GM10248 (cell line): ENCODE measurements at regions of chr6 and their contacts with region 1.

Region 1: GRCh38 chr6:25263657-25264056 is 15.5 kb upstream of the CARMIL1 start:
- DNase-seq: no peak
- CTCF ChIP-seq: no peak

Region 2: DNA sequence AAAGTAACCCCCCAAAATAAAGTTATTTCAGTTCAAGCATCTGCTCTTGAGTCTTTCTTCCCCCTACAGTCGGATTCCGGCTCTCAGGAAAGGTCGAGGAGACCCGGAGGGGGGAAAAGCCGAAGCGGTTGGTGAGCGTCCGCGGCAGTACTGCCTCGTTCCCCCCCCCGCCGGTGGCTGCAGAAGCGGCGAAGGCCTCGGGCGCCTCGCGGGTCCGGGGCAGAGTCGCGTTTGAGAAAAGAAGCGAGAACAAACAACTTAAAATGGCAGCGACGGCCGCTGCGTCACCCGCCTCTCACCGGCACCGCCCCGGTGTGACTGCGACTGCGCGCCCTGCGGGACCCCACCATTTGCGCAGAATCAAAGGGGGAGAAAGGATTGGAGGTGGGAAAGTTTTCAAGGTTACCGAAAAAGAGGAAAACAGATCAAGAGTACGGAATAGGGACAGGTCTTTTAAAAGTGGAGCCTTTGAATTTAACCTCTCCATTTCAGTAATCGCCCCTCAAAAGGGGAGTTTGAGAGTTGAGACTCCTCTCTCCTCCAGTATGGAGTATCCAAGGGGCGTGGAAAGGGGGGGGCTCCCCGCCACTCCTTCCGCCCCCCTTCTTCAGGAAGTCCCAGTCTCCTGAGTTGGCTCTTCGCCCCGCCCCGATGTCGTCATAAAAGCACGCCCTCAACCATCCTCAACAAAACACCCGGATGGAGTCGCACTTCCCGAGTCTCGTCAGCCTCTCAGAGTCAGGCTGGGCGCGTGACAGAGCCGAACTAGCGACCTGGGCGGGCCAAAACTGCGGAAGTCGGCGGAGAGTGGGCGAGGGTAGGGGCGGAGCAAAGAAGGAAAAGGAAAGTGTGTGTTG is 542.8 kb before region 1 on chr6:
- CTCF ChIA-PET with region 1: no interaction called
- POLR2A ChIA-PET with region 1: no interaction called
- DNase-seq: peak; percentile 97
- CTCF ChIP-seq: no peak

Region 3: DNA sequence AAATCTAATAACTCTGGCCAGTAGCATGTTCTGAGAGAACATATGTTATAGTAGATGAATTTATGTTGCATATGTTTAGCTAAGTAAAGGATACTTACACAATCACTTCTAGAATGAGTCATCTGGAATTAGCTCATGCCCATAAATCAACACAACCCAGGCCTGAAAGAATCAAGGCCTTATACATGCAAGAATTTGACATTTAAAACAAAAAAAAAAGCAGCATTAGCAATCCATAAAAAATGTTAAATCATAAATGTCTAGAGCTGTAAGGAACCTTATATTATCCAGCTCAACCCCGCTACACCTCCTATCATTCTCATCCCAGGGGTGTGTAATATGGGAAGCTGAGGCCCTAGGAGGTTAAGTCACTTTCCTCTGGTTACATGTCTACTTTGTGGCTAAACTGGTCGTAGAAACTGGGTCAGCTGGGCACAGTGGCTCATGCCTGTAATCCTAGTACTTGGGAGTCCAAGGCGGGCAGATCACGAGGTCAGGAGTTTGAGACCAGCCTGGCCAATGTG is 89.6 kb before region 1 on chr6:
- CTCF ChIA-PET with region 1: no interaction called
- POLR2A ChIA-PET with region 1: no interaction called
- DNase-seq: no peak
- CTCF ChIP-seq: no peak

Region 4: GRCh38 chr6:25242567-25242966 is 21.1 kb before region 1 on chr6:
- CTCF ChIA-PET with region 1: interaction called, 19 read pairs
- POLR2A ChIA-PET with region 1: no interaction called
- DNase-seq: no peak
- CTCF ChIP-seq: no peak

Region 5: GRCh38 chr6:25288143-25288917 is 24.7 kb after region 1 on chr6:
- CTCF ChIA-PET with region 1: interaction called, 13 read pairs
- POLR2A ChIA-PET with region 1: no interaction called
- DNase-seq: no peak
- CTCF ChIP-seq: no peak

Region 6: GRCh38 chr6:25497383-25498040 is 233.9 kb after region 1 on chr6:
- CTCF ChIA-PET with region 1: interaction called, 97 read pairs
- POLR2A ChIA-PET with region 1: no interaction called
- DNase-seq: no peak
- CTCF ChIP-seq: no peak

Region 7: DNA sequence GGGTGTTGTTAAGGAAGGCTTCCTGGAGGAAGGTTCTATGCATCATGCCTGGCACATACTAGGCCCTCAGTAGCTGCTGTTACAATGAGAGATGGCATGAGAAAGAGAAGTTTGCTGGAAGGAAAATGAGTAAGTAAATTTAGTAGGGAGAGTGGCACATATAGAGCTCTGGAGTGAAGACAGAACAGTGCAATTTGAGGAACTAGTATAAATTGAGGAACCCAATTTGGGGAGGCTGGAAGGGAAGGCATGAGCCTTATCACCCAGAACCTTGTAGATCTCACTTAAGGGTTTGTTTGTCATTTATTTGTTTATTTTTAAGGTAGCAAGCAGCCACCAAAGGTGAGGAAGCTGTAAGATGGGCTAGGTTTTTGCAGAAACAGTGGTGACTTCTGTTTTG is 301.3 kb after region 1 on chr6:
- CTCF ChIA-PET with region 1: interaction called, 60 read pairs
- POLR2A ChIA-PET with region 1: no interaction called
- DNase-seq: no peak
- CTCF ChIP-seq: no peak